IMR-90 (cell line): ENCODE measurements at regions of chr1 and their contacts with region 1.

Region 1: GRCh38 chr1:155989242-155990004 is 11.1 kb upstream of the ARHGEF2 start:
- DNase-seq: peak; percentile 61
- ATAC-seq: peak; percentile 98
- H3K4me3 ChIP-seq: no peak overlapping the region
- H3K27ac ChIP-seq: peak overlapping the region; percentile 8; the same call in 1 of the 2 replicates
- H3K4me1 ChIP-seq: peaks cover 10% of the 10 kb centered on the region
- H3K27me3 ChIP-seq: no peaks in the 10 kb centered on the region
- CTCF ChIP-seq: peak; percentile 95
- POLR2A ChIP-seq: peak; percentile 57; the same call in 1 of the 2 replicates
- RAD21 ChIP-seq: peak; percentile 98

Region 2: GRCh38 chr1:155893389-155894142 is 95.9 kb before region 1 on chr1:
- CTCF ChIA-PET with region 1: interaction called, 12 read pairs
- POLR2A ChIA-PET with region 1: no interaction called
- dilution Hi-C with region 1: no loop called
- in situ Hi-C with region 1: no loop called
- intact Hi-C with region 1: no loop called
- DNase-seq: peak; percentile 91
- ATAC-seq: peak; percentile 45
- H3K4me3 ChIP-seq: no peak overlapping the region
- H3K27ac ChIP-seq: peak overlapping the region; percentile 95
- H3K4me1 ChIP-seq: peaks cover 19% of the 10 kb centered on the region
- H3K27me3 ChIP-seq: no peaks in the 10 kb centered on the region
- CTCF ChIP-seq: no peak
- POLR2A ChIP-seq: no peak; the same call in 1 of the 2 replicates
- RAD21 ChIP-seq: no peak

Region 3: DNA sequence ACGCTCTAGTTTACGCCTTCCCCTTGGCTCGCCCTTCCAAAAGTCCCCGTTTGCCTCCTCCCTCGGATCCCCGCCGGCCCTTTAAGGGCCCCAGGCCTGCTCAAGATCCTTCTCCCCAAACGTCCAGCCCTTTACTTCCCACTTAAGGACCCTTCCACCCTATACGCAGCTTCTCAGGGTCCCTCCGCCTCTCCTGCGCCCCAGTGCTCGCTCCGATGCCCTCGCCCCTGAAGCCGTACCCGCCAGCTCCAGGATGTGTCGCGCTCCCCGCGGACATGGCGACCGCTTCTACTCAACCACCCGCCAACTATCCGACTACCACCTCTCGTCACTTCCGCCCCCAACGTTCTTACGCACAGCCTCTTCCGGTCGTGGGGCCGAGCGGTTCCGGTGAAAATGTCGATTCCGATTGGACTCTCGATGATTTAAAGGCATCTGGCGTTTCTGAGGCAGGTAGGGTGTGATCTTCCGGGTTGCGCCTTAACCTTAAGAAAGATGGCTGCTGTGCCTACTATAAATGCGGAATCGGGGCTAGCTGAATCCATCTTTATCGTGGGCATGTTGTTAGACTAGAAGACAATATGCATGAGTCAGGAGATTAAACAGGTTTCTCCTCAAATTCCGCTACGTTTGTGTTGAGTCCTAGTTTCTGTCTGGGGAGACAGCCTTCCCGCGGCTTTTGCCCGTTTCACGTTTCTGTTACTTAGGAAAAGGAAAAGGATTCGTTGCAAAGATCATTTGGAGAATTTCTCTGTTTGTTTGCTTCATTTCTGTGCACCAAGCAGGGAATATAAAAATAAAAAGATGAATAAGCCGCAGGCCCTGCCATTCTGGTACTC is 55.1 kb before region 1 on chr1 and contains the start of gene KHDC4:
- CTCF ChIA-PET with region 1: interaction called, 11 read pairs
- POLR2A ChIA-PET with region 1: interaction called, 18 read pairs
- dilution Hi-C with region 1: no loop called
- in situ Hi-C with region 1: loop called (anchors 5 kb)
- intact Hi-C with region 1: loop called (anchors 1 kb)
- DNase-seq: peak; percentile 99
- ATAC-seq: peak; percentile 90
- H3K4me3 ChIP-seq: peak within 1 kb of the TSS; percentile 78
- H3K27ac ChIP-seq: peak within 1 kb of the TSS; percentile 93
- H3K4me1 ChIP-seq: peaks cover 7% of the 10 kb centered on the region
- H3K27me3 ChIP-seq: no peaks in the 10 kb centered on the region
- CTCF ChIP-seq: 0 out of 2 replicates have a peak, but pooled peaks have one; percentile 11
- POLR2A ChIP-seq: peak; percentile 98
- RAD21 ChIP-seq: no peak; the same call in 1 of the 2 replicates
- total RNA-seq, gene KHDC4: 22.5 and 28.0 TPM in 2 replicates

Region 4: GRCh38 chr1:155961937-155962336 is 27.5 kb before region 1 on chr1:
- CTCF ChIA-PET with region 1: interaction called, 5 read pairs
- POLR2A ChIA-PET with region 1: no interaction called
- dilution Hi-C with region 1: no loop called
- in situ Hi-C with region 1: no loop called
- intact Hi-C with region 1: loop called (anchors 1 kb)
- DNase-seq: peak; percentile 97
- ATAC-seq: peak; percentile 91
- H3K4me3 ChIP-seq: no peak overlapping the region
- H3K27ac ChIP-seq: peak overlapping the region; percentile 20
- H3K4me1 ChIP-seq: peaks cover 14% of the 10 kb centered on the region
- H3K27me3 ChIP-seq: no peaks in the 10 kb centered on the region
- CTCF ChIP-seq: peak; percentile 58
- POLR2A ChIP-seq: no peak
- RAD21 ChIP-seq: peak; percentile 70

Region 5: DNA sequence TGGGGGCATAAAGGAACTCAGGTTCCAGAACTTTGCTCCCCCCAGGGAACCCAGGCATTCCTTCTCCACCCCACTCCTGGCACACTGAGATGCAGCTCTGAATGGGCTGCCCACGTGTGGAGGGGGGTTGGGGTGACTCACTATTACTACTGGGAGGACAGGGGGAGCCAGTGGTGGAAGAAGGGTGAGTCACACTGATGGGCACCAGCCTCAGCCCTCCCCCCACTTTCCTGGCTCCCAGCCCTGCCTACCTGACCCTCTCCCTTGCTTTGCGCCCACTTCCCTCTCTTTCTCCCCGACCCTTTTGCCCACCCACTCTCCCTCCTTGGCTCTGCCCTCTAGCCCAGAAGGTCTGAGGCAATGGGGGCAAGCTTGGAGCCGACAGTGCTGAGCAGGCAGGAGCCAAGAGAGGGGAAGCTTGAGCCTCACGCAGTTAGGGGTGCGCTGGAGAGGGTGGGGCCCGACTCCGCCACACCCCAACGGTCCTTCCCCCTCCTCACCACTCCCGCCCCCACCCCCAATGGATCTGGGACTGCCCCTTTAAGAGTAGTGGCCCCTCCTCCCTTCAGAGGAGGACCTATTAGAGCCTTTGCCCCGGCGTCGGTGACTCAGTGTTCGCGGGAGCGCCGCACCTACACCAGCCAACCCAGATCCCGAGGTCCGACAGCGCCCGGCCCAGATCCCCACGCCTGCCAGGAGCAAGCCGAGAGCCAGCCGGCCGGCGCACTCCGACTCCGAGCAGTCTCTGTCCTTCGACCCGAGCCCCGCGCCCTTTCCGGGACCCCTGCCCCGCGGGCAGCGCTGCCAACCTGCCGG is 124.9 kb after region 1 on chr1 and contains the start of gene LMNA:
- CTCF ChIA-PET with region 1: no interaction called
- POLR2A ChIA-PET with region 1: no interaction called
- dilution Hi-C with region 1: no loop called
- in situ Hi-C with region 1: no loop called
- intact Hi-C with region 1: no loop called
- DNase-seq: peak; percentile 95
- ATAC-seq: peak; percentile 88
- H3K4me3 ChIP-seq: peak within 1 kb of the TSS; percentile 98
- H3K27ac ChIP-seq: peak within 1 kb of the TSS; percentile 96
- H3K4me1 ChIP-seq: peaks cover 14% of the 10 kb centered on the region
- H3K27me3 ChIP-seq: no peaks in the 10 kb centered on the region
- CTCF ChIP-seq: no peak
- POLR2A ChIP-seq: peak; percentile 99
- RAD21 ChIP-seq: no peak
- total RNA-seq, gene LMNA: 753 and 755 TPM in 2 replicates

Region 6: DNA sequence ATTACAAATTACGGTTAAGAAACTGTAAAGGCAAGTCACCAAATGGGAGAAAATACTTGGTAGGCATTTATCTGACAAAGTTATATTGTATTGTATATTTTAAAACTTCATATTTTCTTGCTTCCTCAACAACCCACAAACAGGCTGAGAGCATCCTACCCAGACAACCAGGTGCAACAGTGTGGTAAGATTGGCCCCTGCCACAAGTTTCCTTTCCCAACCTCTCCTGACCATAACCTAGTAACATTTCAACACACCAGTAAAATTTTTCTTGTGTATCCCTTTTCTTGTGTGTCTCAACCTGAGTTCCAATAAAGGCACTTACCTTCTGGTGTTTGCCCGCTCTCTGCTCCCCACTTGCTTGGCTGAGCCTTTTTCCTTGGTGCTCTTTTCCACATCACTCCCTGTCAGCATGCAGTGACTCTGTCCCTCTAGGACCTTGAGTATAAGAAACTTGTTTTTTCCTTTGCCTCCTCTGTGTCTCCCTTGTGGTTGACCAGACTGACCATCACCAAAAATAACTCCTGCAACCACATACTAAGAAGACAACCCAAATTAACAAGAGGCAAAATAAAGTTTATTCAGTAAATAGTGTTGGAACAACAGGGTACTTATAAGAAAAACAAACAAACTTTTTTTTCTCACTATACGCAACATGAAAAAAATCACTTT is 1670.3 kb after region 1 on chr1:
- CTCF ChIA-PET with region 1: no interaction called
- POLR2A ChIA-PET with region 1: no interaction called
- dilution Hi-C with region 1: no loop called
- in situ Hi-C with region 1: no loop called
- intact Hi-C with region 1: no loop called
- DNase-seq: no peak
- ATAC-seq: no peak
- H3K4me3 ChIP-seq: no peak overlapping the region
- H3K27ac ChIP-seq: no peak overlapping the region
- H3K4me1 ChIP-seq: no peaks in the 10 kb centered on the region
- H3K27me3 ChIP-seq: no peaks in the 10 kb centered on the region
- CTCF ChIP-seq: no peak
- POLR2A ChIP-seq: no peak
- RAD21 ChIP-seq: no peak